Body of pancreas (tissue), 4 donors: ENCODE measurements at regions of chr1 and their contacts with region 1.

Region 1: DNA sequence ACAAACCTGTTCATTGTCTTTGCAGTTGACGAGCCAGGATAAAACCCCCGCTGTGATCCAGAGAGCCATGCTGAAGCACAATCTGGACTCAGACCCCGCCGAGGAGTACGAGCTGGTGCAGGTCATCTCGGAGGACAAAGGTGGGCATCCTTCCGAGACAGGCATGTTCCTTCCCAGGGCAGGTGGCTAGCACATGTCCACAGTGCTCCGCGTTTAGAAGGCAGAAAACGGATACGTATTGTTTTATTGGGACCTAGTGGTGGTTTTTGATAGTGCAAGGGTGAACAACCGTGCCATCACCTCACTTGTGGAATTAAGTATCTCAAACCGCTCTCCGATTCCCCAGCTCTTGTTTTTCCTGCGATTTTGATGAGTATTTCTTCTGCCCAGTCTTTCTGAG is 115.3 kb downstream of the COLGALT2 start:
- DNase-seq: no peak
- ATAC-seq: no peak
- H3K4me3 ChIP-seq: no peak overlapping the region
- H3K27ac ChIP-seq: no peak overlapping the region
- H3K4me1 ChIP-seq: no peaks in the 10 kb centered on the region
- H3K27me3 ChIP-seq: no peaks in the 10 kb centered on the region
- CTCF ChIP-seq: no peak
- POLR2A ChIP-seq: no peak

Region 2: GRCh38 chr1:183652547-183653461 is 269.4 kb before region 1 on chr1 and contains the start of gene APOBEC4:
- intact Hi-C with region 1: loop called (anchors 5 kb)
- DNase-seq: peak in 1 of 4 donors; percentile 23
- ATAC-seq: peak; percentile 48
- H3K4me3 ChIP-seq: no peak within 1 kb of the TSS
- H3K27ac ChIP-seq: no peak within 1 kb of the TSS
- H3K4me1 ChIP-seq: peaks cover 6% of the 10 kb centered on the region
- H3K27me3 ChIP-seq: no peaks in the 10 kb centered on the region
- CTCF ChIP-seq: no peak
- POLR2A ChIP-seq: no peak
- total RNA-seq, gene APOBEC4: not detected